ENCODE measurements at regions of chr20 and their contacts with region 1.

Region 1: DNA sequence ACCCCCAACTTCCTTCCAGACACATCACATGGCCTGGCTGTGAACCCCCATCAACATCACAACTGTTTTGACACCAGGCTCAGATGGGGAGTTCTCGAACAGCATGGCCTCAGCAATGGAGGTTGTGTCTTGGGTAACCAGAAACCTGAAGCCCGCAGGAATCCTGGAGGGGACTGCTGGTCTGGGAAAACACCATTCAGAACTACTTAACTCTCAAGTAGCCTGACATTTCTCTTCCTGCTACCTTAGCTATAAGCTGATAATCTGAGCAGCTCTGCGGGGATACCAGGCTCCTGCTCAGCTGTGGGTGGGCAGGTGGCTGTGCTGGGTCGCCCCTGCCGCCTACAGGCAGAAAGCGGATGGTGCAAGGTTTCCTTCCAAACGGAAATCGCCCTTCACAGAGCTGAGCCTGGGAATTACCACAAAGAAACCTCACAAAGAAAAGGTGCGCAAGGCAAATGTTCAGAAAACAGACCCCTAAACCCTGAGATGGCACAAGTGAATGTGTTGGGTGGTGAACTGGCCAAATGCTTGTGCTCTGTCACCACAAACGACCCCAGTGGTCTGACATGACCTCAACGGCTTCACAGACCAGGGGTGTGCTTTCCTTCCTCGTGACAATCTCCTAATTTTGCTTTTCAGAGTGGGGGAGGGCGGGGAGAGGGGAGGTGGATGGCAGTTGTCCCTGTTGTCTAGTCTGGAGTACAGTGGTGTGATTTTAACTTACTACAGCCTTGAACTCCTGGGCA is 29.5 kb downstream of the SNX5 start:
- ATAC-seq: peak; percentile 59 to 88 (median 84)
- H3K4me3 ChIP-seq: no peak overlapping the region
- H3K27ac ChIP-seq: no peak overlapping the region
- H3K4me1 ChIP-seq: peaks cover 8 to 27% of the 10 kb centered on the region in 2 donors

Region 2: DNA sequence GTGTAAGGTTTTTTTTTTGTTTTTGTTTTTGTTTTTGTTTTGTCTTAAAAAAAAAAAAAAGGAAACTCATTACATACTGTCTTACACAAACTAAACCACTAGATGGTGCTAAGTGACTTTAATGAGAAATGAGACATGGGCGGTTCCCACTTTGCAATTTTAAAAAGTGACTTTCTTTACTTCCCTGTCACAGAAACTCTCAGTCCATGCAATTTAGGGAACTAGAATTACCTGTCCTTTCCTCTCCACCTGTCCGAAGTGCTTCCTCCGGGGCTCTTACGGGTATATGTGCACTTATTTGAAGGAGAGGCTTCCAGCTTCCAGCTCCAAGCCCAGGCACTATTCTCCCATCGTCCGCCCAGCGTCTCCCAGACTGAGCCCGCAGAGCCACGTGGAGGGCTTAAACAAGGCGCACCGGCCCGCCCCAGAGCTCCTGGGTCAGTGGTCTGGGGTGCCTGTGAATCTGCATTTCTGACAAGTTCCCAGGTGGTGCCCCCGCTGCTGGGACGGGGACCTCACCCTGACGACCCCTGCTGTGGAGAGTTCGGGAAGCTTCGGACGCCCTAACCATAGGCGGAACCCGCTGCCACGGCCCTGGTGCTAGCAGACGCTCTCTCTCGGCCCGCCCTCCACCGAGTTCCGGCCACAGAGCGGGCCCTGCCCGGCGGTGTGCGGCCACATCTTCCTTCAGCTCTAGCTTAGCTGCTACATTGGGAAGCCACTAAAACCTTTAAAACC is 434.0 kb before region 1 on chr20:
- in situ Hi-C with region 1: loop called in 2 of 9 experiments (anchors 25 kb)
- ATAC-seq: peak; percentile 73 to 94 (median 82)
- H3K4me3 ChIP-seq: peak overlapping the region in 4 of 5 donors; percentile 10 to 31 (median 16)
- H3K27ac ChIP-seq: no peak overlapping the region
- H3K4me1 ChIP-seq: peaks cover 0 to 5% of the 10 kb centered on the region in 2 donors

Region 3: GRCh38 chr20:18032977-18033892 is 94.2 kb after region 1 on chr20:
- in situ Hi-C with region 1: loop called in 1 of 9 experiments (anchors 25 kb)
- ATAC-seq: no peak
- H3K4me3 ChIP-seq: no peak overlapping the region
- H3K27ac ChIP-seq: no peak overlapping the region
- H3K4me1 ChIP-seq: peaks cover 0 to 4% of the 10 kb centered on the region in 2 donors

Region 4: GRCh38 chr20:18187020-18187419 is 248.0 kb after region 1 on chr20:
- in situ Hi-C with region 1: no loop called
- ATAC-seq: peak in 1 of 8 experiments; percentile 36
- H3K4me3 ChIP-seq: no peak overlapping the region
- H3K27ac ChIP-seq: no peak overlapping the region
- H3K4me1 ChIP-seq: no peaks in the 10 kb centered on the region

Measured in motor neuron (in vitro differentiated cells).